Mammary epithelial cell (primary cell): ENCODE measurements at regions of chr5 and their contacts with region 1.

Region 1: DNA sequence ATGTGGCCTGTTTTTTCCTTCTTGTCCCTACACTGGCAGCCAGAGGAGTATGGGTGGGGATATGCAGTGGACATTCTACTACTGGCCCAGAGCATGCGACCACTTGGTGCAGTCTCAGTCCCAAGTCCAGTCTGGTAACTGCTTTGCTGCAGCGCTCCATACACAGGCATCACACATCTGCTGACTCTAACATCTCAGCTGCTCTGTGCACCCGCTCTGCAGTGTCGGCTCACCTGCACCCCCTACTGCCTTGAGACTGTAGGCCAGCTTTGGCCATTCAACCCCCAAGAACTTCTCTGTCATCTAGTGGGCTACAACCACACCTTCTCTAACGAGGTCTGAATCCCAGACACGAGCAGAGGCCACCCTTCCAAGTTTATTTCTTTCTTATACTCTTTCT is 46.4 kb upstream of the SLCO6A1 start:
- DNase-seq: no peak
- H3K4me3 ChIP-seq: no peak overlapping the region
- H3K27ac ChIP-seq: no peak overlapping the region
- H3K4me1 ChIP-seq: no peaks in the 10 kb centered on the region
- H3K27me3 ChIP-seq: no peaks in the 10 kb centered on the region
- CTCF ChIP-seq: peak; percentile 16 to 26

Region 2: DNA sequence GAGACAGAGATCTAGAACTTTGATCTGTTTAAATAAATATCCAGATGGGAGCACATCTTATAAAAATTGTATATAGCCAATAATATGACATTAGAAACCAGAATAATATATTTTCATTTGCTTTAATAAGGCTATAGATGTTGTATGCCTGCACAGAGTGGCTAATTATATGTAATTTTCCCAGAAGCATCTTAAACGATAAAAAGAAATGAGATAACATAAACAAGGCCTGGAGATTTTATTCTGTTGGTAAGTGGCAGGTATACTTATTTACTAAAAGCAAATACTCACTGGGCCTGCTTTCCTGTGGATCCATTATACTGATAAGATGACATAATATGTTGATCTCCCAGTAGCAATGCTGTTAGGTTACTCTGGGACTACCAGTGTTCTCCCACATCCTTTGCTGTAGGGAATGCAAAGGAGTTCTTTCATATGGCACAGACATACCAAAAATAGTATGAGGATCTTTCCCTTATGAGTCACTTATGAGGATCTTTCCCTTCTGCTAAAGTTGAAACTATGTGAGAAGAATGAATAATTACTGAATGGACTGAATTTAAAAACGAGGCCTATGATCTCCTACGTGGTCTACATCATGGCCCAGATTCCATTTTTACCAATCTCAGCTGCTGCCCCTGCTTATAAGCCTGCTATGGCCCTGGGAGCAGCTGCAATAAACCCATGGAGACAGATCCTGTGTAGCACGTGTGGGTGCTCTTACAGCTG is 905.3 kb after region 1 on chr5:
- CTCF ChIA-PET with region 1: no interaction called
- dilution Hi-C with region 1: no loop called
- in situ Hi-C with region 1: loop called in 1 of 2 experiments (anchors 25 kb)
- intact Hi-C with region 1: no loop called
- DNase-seq: peak; percentile 72
- H3K4me3 ChIP-seq: no peak overlapping the region
- H3K27ac ChIP-seq: no peak overlapping the region
- H3K4me1 ChIP-seq: peaks cover 4% of the 10 kb centered on the region
- H3K27me3 ChIP-seq: no peaks in the 10 kb centered on the region
- CTCF ChIP-seq: no peak